ENCODE measurements at regions of chr4 and their contacts with region 1.

Region 1: DNA sequence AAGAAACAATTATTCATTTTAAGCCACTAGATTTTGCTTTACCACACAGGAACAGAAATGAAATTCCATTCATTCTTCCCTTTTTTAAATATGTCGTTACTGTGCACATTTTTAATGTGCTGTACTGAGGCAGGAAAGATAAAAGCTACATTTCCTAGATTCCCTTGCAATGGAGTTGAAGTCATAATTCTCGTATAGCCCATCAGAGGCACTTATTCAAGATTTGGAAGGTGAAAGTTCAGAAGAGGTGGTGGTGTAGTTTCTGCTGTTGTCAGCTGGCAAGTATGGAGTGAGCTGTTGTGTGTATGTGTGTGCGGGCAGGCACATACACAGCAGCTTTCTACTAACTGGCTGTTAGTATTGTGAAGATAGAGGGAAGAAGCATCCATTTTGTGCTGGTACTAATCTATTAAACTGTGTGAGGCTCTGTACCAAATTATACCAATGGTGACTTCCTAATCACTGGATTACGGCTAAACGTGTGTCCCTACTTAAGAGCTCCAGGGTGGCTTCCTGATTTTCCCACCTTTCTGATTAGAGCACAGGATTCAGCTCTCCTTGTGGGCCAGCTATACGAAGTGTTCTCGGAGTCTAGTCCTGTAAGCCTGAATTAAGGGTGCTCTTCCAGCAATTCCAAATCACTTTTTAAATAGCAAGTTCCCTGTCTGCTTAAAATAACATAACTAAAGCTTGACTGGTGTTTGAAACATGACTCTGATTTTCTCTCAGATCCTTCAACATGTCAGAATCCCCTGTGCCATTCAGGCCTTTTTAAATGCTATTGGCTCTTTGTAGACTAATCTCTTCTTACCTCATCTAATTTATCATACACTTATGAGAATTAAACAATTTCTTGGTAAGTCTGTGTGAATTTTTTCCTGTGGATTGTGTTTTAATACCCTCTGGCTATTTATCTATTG is 43.8 kb downstream of the PDS5A start:
- DNase-seq: no peak
- ATAC-seq: no peak
- H3K4me3 ChIP-seq: no peak overlapping the region
- H3K4me3 Mint-ChIP-seq: peak overlapping the region in 2 of 3 donors; percentile 7 to 21
- H3K27ac ChIP-seq: peak overlapping the region; percentile 37
- H3K27ac Mint-ChIP-seq: peak overlapping the region; percentile 29 to 40
- H3K4me1 ChIP-seq: peaks cover 0 to 51% of the 10 kb centered on the region in 2 experiments
- H3K4me1 Mint-ChIP-seq: peaks cover 71 to 72% (median 72%) of the 10 kb centered on the region in 3 donors
- H3K27me3 ChIP-seq: no peaks in the 10 kb centered on the region
- H3K27me3 Mint-ChIP-seq: no peaks in the 10 kb centered on the region

Region 2: DNA sequence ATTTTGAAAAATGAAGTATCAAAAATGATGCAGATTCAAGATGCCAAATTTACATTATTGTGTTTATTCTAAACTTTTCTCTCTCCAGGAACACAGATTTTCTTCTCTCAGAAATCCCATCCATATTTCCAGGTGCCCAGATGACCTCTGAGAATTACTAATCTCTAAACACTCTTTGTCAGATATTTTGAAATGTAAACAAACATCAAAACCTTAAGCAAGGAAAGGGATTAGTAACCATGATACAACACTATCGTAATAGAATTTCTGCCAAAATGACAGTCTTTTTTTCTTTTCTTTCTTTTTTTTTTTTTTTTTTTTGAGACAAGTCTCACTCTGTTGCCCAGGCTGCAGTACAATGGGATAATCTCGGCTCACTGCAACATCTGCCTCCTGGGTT is 33.0 kb before region 1 on chr4:
- CTCF ChIA-PET with region 1: no interaction called
- POLR2A ChIA-PET with region 1: interaction called in 1 of 2 experiments, 16 read pairs
- DNase-seq: no peak
- ATAC-seq: no peak
- H3K4me3 ChIP-seq: no peak overlapping the region
- H3K4me3 Mint-ChIP-seq: no peak overlapping the region
- H3K27ac ChIP-seq: no peak overlapping the region
- H3K27ac Mint-ChIP-seq: no peak overlapping the region
- H3K4me1 ChIP-seq: no peaks in the 10 kb centered on the region
- H3K4me1 Mint-ChIP-seq: peaks cover 0 to 5% (median 0%) of the 10 kb centered on the region in 3 donors
- H3K27me3 ChIP-seq: no peaks in the 10 kb centered on the region
- H3K27me3 Mint-ChIP-seq: no peaks in the 10 kb centered on the region

Region 3: DNA sequence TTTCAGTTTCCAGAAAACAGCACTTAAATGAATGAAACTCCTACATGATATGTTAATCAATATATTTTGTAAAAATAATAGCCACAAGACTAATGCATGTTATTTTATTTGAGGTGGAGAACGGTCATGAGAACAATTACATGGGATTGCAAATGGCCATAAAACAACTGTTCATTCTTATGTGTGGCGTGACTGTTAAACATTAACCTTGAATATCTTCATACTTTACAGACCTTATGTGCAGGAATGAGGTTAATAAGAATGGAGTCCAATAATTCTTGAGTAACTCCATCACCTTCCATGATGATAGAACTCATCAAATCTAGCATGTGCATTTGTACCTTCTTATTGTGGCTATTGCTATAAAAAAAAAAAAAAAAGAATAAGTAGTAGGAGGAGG is 11.5 kb before region 1 on chr4:
- CTCF ChIA-PET with region 1: no interaction called
- POLR2A ChIA-PET with region 1: no interaction called
- DNase-seq: no peak
- ATAC-seq: no peak
- H3K4me3 ChIP-seq: no peak overlapping the region
- H3K4me3 Mint-ChIP-seq: no peak overlapping the region
- H3K27ac ChIP-seq: no peak overlapping the region
- H3K27ac Mint-ChIP-seq: no peak overlapping the region
- H3K4me1 ChIP-seq: no peaks in the 10 kb centered on the region
- H3K4me1 Mint-ChIP-seq: peaks cover 4 to 15% (median 5%) of the 10 kb centered on the region in 3 donors
- H3K27me3 ChIP-seq: no peaks in the 10 kb centered on the region
- H3K27me3 Mint-ChIP-seq: no peaks in the 10 kb centered on the region